Right ventricle myocardium superior (tissue), 1 donor: ENCODE measurements at regions of chr17 and their contacts with region 1.

Region 1: DNA sequence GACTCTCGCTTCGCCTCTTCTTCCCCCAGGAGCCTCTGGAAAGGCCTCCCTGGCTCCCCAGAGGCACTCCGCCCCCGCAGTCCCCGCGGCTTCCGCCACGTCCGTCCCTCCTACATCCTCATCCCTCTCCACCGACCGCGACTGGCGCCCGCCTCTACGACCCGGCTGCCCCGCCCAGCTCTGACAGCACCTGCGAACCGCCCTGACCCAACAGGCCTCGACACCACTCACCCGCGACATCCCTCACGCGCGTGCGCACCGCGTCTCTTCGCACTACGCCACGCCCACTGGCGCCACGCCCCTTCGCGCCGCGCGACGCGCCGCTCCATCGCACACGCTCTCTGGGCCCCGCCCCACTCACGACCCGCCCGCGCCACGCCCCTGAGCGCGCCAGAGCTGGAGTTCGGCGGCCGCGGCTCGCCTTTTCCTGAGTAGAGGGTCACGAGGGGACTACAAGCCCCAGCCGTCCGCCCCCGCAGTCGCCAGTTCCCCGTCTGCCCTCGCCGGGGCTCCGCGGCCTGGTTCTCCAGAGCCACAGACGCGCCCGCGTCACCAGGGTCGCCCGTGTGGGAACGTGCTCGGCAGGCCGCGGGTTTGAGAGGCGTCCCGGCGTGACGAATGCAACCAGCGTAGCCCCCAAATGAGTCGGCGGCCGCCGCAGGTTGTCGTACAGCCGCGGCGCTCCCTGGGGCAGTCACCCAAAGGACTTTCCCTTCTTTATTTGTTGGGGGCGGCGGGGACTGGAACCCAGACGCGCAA is 56.2 kb upstream of the LRRC37A3 start:
- DNase-seq: peak; percentile 97
- ATAC-seq: peak; percentile 99

Region 2: DNA sequence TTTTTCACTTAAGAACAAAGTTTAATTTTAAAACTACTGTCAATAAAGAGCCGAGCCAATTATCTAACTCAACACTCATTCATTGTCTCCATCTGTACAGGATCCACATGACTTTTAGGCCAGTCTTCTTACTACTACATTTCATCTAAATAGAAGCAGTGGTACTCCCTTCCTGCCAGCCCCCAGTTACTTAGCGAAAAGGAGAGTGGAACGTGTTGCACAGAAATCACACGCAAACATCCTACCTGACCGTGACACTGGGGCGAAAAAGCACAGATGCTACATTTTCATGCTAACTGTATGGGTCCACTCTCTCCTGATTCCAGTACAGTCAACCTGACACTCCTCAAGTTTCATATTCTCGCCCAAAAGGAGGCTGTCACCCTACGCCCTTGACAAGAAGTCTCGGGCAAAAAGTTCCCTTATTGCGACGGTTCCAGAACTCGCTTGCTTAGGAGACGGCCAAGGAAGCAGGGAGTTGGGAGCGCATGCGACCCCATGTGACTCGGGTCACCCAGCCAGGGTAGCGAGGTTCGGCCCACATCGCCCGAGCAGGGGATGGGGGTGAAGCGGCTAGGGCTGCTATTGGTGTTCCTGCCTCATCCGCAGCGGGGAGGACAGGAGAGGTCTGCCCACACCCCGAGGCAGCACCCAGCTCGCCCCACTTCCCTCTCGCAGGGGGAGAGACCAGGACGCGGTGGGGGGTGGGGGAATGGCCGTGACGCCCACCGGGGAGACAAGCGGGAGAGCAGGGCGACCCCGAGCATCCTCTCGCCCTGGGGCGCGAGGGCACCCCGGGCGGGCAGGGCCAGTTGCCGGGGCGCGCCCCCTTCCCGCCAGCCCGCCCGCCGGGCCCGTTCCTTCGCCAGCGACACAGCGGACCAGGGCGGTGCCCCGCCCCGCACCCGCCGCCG is 80.1 kb after region 1 on chr17:
- intact Hi-C with region 1: loop called (anchors 1 kb)
- DNase-seq: peak; percentile 79
- ATAC-seq: peak; percentile 45

Region 3: GRCh38 chr17:65100316-65101140 is 125.0 kb after region 1 on chr17:
- intact Hi-C with region 1: no loop called
- DNase-seq: peak; percentile 94
- ATAC-seq: peak; percentile 97